ENCODE measurements at regions of chr1 and their contacts with region 1.

Region 1: GRCh38 chr1:37726751-37727585 is 34.7 kb downstream of the CDCA8 start:
- DNase-seq: no peak
- ATAC-seq: no peak
- H3K4me3 ChIP-seq: no peak overlapping the region
- H3K27ac ChIP-seq: no peak overlapping the region
- H3K4me1 ChIP-seq: peaks cover 38% of the 10 kb centered on the region
- H3K27me3 ChIP-seq: peaks cover 0 to 5% of the 10 kb centered on the region in 2 experiments; a peak in 2 of 5 replicates
- CTCF ChIP-seq: no peak
- EP300 ChIP-seq: no peak
- POLR2A ChIP-seq: no peak
- RAD21 ChIP-seq: no peak

Region 2: GRCh38 chr1:37741130-37741529 is 14.2 kb after region 1 on chr1:
- CTCF ChIA-PET with region 1: no interaction called
- POLR2A ChIA-PET with region 1: no interaction called
- in situ Hi-C with region 1: no loop called
- intact Hi-C with region 1: no loop called
- DNase-seq: no peak
- ATAC-seq: no peak
- H3K4me3 ChIP-seq: no peak overlapping the region
- H3K27ac ChIP-seq: no peak overlapping the region
- H3K4me1 ChIP-seq: peaks cover 6% of the 10 kb centered on the region; the same call in 1 of the 2 replicates
- H3K27me3 ChIP-seq: no peaks in the 10 kb centered on the region
- CTCF ChIP-seq: no peak
- EP300 ChIP-seq: no peak
- POLR2A ChIP-seq: no peak
- RAD21 ChIP-seq: no peak

Region 3: DNA sequence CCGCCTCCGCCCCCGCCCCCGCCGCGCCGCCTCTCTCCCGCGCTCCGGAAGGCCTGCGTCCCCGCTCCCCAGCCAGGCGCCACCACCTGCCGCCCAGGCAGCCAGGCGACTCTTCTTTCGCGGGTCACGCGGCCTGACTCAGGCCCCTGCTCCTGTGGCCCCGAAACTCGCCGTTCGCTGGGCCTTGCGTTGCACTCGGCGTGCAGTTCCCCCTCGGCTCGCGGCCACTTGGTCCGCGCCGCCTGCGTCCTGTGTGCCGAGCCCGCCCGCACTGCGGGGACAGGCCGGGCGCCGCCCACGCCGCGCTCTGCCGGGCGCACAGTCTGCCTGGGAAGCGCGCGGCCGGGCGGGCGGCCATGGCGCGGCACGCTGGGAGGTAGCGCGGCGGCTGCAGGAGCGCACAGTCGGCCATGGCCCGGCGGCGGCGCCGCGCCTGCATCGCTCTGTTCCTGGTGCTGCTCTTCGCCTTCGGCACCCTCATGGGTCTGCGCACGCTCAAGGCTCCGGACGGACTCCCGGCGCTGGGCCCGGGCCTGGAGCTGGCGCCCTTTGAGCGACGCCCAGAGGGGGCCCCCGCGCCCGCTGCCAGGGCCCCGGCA is 66.9 kb after region 1 on chr1 and contains the start of gene MANEAL:
- CTCF ChIA-PET with region 1: no interaction called
- POLR2A ChIA-PET with region 1: no interaction called
- in situ Hi-C with region 1: no loop called
- intact Hi-C with region 1: loop called (anchors 10 kb)
- DNase-seq: no peak
- ATAC-seq: peak; percentile 80
- H3K4me3 ChIP-seq: peak within 1 kb of the TSS; percentile 74 to 81 (median 78)
- H3K27ac ChIP-seq: peak within 1 kb of the TSS; percentile 63
- H3K4me1 ChIP-seq: peaks cover 24% of the 10 kb centered on the region
- H3K27me3 ChIP-seq: peaks cover 0 to 9% of the 10 kb centered on the region in 2 experiments; a peak in 3 of 5 replicates
- CTCF ChIP-seq: no peak
- EP300 ChIP-seq: no peak
- POLR2A ChIP-seq: peak in 1 of 2 experiments; percentile 68; a peak in 2 of 4 replicates
- RAD21 ChIP-seq: peak; percentile 48
- total RNA-seq, gene MANEAL: 16.8 and 26.4 TPM in 2 replicates